Activated CD4-positive, alpha-beta T cell treated with anti-CD3 and anti-CD28 coated beads, Interleukin-2, amount 10 ng/mL, durations not matched to agents 24 days and 14 days (primary cell): ENCODE measurements at regions of chr9 and their contacts with region 1.

Region 1: DNA sequence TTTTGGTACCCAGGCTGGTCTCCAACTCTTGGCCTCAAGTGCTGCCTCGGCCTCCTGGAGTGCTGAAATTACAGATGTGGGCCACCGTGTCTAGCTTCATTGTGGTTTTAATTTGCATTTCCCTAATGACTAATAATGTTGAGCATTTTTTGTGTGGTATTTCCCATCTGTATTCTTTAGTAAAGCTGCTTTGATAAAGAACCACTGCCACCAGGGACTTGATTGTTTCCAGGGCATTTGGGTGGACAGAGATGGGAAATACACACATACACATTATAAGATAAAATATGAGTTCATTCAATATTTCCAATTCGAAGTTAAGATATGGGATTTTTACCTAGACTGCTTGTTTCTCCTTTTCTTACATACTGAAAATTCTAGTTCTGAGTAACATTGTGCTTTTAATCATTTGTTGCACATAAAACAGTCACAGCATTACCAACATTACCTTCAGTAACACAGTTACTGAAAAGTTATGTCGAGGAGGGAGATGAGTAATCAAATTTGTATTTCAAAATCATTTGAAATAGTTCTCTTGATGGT is 28.9 kb downstream of the HABP4 start:
- DNase-seq: no peak
- H3K4me3 Mint-ChIP-seq: no peak overlapping the region
- H3K27ac Mint-ChIP-seq: peak overlapping the region; percentile 34
- H3K4me1 Mint-ChIP-seq: peaks cover 9% of the 10 kb centered on the region
- H3K27me3 Mint-ChIP-seq: no peaks in the 10 kb centered on the region

Region 2: GRCh38 chr9:96491079-96491879 is 12.4 kb after region 1 on chr9:
- intact Hi-C with region 1: loop called (anchors 1 kb)
- DNase-seq: peak; percentile 64
- H3K4me3 Mint-ChIP-seq: peak overlapping the region; percentile 44
- H3K27ac Mint-ChIP-seq: peak overlapping the region; percentile 71
- H3K4me1 Mint-ChIP-seq: peaks cover 6% of the 10 kb centered on the region
- H3K27me3 Mint-ChIP-seq: no peaks in the 10 kb centered on the region

Region 3: DNA sequence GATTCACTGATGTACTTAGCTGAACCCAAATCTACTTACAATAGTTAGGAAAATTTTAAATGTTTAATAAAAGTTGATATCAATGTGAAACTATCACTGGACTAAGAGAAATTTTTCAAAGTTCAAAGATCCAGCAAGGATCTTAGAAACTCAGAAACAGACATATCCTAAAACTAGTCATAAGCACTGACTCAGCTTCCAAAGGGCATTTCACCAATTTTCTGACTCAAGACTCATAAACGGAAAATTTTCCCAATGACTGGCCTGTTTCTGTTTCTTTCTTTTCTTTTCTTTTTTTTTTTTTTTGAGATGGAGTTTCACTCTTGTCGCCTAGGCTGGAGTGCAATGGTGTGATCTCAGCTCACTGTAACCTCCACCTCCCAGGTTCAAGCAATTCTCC is 74.2 kb after region 1 on chr9:
- intact Hi-C with region 1: loop called (anchors 5 kb)
- DNase-seq: no peak
- H3K4me3 Mint-ChIP-seq: no peak overlapping the region
- H3K27ac Mint-ChIP-seq: peak overlapping the region; percentile 60
- H3K4me1 Mint-ChIP-seq: peaks cover 13% of the 10 kb centered on the region
- H3K27me3 Mint-ChIP-seq: peaks cover 2% of the 10 kb centered on the region